Body of pancreas (tissue), 4 donors: ENCODE measurements at regions of chr12 and their contacts with region 1.

Region 1: GRCh38 chr12:126874427-126875026 is 1392.4 kb upstream of the TMEM132C start:
- DNase-seq: peak; percentile 67 to 79 (median 72)
- ATAC-seq: peak; percentile 75
- H3K4me3 ChIP-seq: no peak overlapping the region
- H3K27ac ChIP-seq: no peak overlapping the region
- H3K4me1 ChIP-seq: no peaks in the 10 kb centered on the region
- H3K27me3 ChIP-seq: no peaks in the 10 kb centered on the region
- CTCF ChIP-seq: peak; percentile 82 to 90 (median 85)
- POLR2A ChIP-seq: no peak

Region 2: DNA sequence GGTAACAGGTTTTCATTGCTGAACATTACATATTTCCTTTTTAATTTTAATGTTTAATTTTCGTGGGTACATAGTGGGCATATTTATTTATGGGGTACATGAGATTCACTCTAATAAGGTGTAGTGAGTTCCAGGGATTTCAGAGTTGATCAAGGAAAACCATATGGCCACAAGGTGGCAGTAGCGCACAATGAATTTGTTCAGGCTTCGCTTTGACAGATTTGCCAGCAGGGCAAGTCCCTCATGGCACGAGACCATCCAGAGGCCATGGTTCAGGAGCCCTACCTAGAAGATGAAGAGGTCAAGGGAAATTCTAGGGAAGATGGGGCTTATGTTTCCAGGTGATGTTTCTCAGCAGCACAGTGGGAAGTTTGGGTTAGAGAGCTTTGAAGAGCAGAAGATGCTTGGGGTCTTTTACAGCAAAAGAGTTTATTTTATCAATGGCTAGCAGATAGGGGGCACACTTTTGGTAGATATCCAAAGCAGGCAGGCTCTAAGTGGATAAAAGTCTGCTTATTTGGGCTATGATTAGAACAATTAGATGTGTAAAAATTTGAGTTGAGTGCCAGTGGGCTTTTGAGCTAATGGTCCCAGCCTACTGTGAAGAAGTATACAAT is 804.9 kb before region 1 on chr12:
- intact Hi-C with region 1: loop called (anchors 10 kb)
- DNase-seq: peak; percentile 58 to 73 (median 68)
- ATAC-seq: no peak
- H3K4me3 ChIP-seq: no peak overlapping the region
- H3K27ac ChIP-seq: no peak overlapping the region
- H3K4me1 ChIP-seq: no peaks in the 10 kb centered on the region
- H3K27me3 ChIP-seq: no peaks in the 10 kb centered on the region
- CTCF ChIP-seq: peak; percentile 36 to 70 (median 61)
- POLR2A ChIP-seq: no peak

Region 3: DNA sequence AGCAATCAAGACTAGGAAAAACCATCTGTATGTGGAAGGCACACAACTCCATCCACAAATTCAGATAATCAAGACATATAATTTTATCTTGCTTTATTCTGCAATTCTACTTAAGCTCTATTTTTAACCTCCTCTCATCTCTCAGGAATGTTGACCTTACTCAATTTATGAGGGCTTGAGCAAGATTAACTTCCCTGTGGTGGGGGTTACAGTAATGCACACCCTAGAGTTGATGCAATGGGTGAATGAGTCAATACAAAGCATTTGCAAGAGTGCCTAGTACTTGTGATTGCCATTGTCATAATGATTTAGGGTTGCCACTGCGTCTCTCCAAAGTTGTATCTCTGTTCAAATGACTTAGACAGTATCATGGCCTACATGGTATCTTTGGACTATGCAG is 206.0 kb before region 1 on chr12:
- intact Hi-C with region 1: no loop called
- DNase-seq: no peak
- ATAC-seq: no peak
- H3K4me3 ChIP-seq: no peak overlapping the region
- H3K27ac ChIP-seq: no peak overlapping the region
- H3K4me1 ChIP-seq: no peaks in the 10 kb centered on the region
- H3K27me3 ChIP-seq: no peaks in the 10 kb centered on the region
- CTCF ChIP-seq: no peak
- POLR2A ChIP-seq: no peak

Region 4: GRCh38 chr12:126681676-126682075 is 192.9 kb before region 1 on chr12:
- intact Hi-C with region 1: no loop called
- DNase-seq: no peak
- ATAC-seq: no peak
- H3K4me3 ChIP-seq: no peak overlapping the region
- H3K27ac ChIP-seq: no peak overlapping the region
- H3K4me1 ChIP-seq: no peaks in the 10 kb centered on the region
- H3K27me3 ChIP-seq: no peaks in the 10 kb centered on the region
- CTCF ChIP-seq: no peak
- POLR2A ChIP-seq: no peak

Region 5: DNA sequence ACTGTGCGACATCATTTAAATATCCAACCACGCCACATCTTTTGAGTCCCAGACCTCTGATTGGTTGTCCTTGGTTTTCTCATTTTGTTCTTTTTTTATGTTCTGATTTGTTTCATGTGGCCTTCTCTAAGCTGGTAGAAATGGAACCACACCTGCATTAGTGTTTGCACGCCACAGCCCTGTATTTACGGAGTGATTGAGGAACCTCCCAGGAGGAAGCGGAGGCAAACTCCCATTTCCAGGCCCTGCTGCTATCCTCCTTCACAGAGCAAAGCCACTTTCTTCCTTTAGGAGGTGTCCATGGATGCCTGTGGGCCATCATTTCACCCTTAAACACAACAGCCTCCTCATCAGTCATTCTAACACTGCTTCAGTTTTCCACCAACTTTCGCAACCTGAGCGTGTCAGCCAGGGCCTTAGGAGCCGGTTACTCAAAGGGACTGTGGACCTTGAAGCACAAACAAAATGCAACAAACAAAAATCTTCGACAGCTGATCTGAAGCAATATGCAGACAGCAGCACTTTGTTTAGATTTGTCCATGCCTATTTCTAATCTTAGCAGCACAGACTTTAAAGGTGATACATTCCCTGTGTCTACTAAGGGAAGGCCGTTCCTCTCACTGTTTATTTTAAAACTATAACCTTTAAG is 134.4 kb after region 1 on chr12:
- intact Hi-C with region 1: no loop called
- DNase-seq: no peak
- ATAC-seq: no peak
- H3K4me3 ChIP-seq: no peak overlapping the region
- H3K27ac ChIP-seq: no peak overlapping the region
- H3K4me1 ChIP-seq: no peaks in the 10 kb centered on the region
- H3K27me3 ChIP-seq: no peaks in the 10 kb centered on the region
- CTCF ChIP-seq: no peak
- POLR2A ChIP-seq: no peak